ENCODE measurements at regions of chr12 and their contacts with region 1.

Region 1: DNA sequence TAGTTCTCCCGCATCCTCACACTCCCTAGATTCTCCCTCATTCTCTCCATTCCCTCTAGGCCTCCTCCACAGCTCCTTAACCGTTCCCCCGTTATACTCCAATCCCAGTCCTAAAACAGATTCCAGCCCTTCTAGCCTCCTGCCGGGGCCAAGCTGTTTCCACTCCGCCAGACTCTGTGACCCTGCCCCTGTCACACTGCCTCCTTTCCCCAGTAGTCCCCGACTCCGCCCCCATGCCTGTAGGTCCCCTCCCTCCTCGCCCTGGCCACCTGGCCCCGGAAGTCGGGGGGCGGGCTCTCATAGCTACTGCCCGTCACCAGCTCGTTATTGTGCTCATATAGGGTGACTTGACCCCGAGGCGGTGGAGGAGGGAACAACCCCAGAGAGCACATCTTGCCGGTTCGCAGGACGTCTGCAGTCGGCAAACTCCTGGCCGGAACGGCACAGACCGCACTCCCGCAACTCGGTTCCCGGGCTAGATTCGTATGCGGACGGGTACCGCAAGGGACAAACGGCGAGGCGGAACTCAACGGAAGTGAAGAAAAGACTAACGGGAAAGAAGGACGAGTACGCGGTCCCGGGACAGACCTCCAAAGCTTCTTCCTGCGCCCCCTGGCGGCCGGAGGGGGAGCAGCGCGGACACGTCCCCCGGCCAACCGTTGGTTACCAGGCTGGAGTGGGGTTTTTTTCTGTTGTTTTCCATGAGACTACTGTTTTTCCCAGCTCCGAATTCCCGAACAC is at the start of gene AAAS:
- DNase-seq: peak; percentile 97
- H3K4me3 ChIP-seq: peak within 1 kb of the TSS; percentile 63
- H3K4me3 Mint-ChIP-seq: peak within 1 kb of the TSS; percentile 84
- H3K27ac Mint-ChIP-seq: peak within 1 kb of the TSS; percentile 84
- H3K4me1 ChIP-seq: peaks cover 20% of the 10 kb centered on the region
- H3K4me1 Mint-ChIP-seq: peaks cover 13% of the 10 kb centered on the region
- H3K27me3 ChIP-seq: no peaks in the 10 kb centered on the region
- H3K27me3 Mint-ChIP-seq: no peaks in the 10 kb centered on the region
- CTCF ChIP-seq: peak; percentile 98
- total RNA-seq, gene AAAS: 63.8 and 67.2 TPM in 2 replicates

Region 2: GRCh38 chr12:53180220-53180930 is 140.9 kb before region 1 on chr12 and contains the starts of genes CSAD and ZNF740:
- CTCF ChIA-PET with region 1: interaction called, 6 read pairs
- POLR2A ChIA-PET with region 1: interaction called, 10 read pairs
- intact Hi-C with region 1: no loop called
- DNase-seq: peak; percentile 98
- H3K4me3 ChIP-seq: peak within 1 kb of the TSS; percentile 71
- H3K4me3 Mint-ChIP-seq: peak within 1 kb of the TSS; percentile 83
- H3K27ac Mint-ChIP-seq: peak within 1 kb of the TSS; percentile 85
- H3K4me1 ChIP-seq: peaks cover 21% of the 10 kb centered on the region
- H3K4me1 Mint-ChIP-seq: peaks cover 23% of the 10 kb centered on the region
- H3K27me3 ChIP-seq: no peaks in the 10 kb centered on the region
- H3K27me3 Mint-ChIP-seq: no peaks in the 10 kb centered on the region
- CTCF ChIP-seq: no peak
- total RNA-seq, gene CSAD: 20.1 and 23.0 TPM in 2 replicates
- total RNA-seq, gene ZNF740: 35.8 and 43.0 TPM in 2 replicates

Region 3: DNA sequence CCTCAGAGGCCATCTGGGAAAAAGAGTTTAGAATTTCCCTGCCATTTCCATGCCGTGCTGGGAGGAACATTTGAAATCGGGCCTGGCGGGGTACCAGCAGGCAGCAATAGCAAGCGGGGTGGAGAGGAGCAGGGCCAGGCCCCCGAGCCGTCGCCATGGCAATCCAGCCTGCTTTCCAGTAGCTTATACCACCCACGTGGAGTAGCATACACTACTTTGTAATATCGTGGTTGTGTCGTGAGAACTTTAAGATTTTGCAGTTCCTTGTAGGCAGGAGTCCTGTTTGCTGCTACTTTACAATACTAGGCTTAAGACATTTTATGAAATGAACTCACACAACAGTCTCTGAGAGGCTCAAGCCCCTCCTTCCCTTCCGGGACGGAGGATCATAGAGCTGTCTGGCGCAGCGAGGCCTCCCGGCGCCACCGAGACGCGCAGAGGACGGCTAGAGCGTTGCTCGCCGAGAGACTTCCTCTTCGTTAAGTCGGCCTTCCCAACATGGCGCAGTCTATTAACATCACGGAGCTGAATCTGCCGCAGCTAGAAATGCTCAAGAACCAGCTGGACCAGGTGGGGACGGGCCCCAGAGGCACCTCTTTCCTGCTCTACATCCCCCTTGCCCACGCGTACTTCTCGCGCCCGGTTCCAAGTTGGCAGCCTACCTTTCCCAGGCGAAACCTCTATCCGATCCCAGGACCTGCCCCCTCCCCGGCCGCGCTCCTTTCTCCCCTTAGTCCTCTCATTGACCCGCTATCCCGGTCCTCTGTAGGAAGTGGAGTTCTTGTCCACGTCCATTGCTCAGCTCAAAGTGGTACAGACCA is 26.0 kb before region 1 on chr12 and contains the start of gene PFDN5:
- CTCF ChIA-PET with region 1: interaction called, 31 read pairs
- POLR2A ChIA-PET with region 1: interaction called, 20 read pairs
- intact Hi-C with region 1: loop called (anchors 1 kb)
- DNase-seq: peak; percentile 84 to 89
- H3K4me3 ChIP-seq: peak within 1 kb of the TSS; percentile 87
- H3K4me3 Mint-ChIP-seq: peak within 1 kb of the TSS; percentile 93
- H3K27ac Mint-ChIP-seq: peak within 1 kb of the TSS; percentile 90
- H3K4me1 ChIP-seq: peaks cover 18% of the 10 kb centered on the region
- H3K4me1 Mint-ChIP-seq: peaks cover 11% of the 10 kb centered on the region
- H3K27me3 ChIP-seq: no peaks in the 10 kb centered on the region
- H3K27me3 Mint-ChIP-seq: no peaks in the 10 kb centered on the region
- CTCF ChIP-seq: no peak
- total RNA-seq, gene PFDN5: 251 and 264 TPM in 2 replicates

Region 4: DNA sequence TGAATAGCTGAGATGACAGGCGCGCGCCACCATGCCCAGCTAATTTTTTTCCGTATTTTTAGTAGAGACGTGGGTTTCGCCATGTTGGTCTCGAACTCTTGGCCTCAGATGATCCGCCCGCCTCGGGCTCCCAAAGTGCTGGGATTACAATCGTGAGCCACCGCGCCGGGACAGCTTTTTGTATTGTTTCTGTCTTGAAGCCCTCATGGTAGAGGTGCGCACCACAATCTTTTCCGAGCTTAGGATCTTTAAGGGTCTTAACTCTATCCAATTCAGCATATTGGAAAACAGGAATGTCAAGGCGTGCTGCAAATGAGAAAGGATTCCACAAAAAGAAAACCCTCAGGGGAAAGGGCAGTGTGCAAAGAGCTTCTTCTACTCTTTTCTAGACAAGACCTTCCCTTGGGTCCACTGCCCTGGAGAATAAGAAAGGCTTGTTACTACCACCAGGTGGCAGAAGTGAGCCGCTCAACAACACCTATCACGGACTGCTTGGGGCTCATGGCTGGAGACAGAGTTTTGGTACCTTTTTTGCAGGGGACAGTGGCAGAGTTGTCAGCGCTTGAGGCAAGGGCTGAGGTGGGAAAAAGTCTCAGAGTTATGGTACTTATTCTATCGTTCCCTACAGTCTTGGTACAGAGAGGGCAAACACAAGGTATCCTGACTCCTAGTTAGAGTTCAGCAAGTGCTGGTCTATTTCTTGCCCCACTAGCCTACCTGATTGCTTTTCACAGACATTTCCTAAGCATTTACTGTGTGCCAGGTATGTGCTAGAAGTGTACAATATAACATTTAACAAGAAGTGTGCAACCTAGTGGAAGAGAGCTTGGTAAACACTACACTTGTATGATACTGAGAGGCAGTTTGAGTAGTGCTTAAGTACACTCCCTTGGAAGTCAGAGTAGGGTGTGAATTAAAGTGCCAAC is 31.4 kb after region 1 on chr12:
- CTCF ChIA-PET with region 1: interaction called, 24 read pairs
- POLR2A ChIA-PET with region 1: interaction called, 3 read pairs
- intact Hi-C with region 1: loop called (anchors 2 kb)
- DNase-seq: peak; percentile 87 to 88
- H3K4me3 ChIP-seq: no peak overlapping the region
- H3K4me3 Mint-ChIP-seq: no peak overlapping the region
- H3K27ac Mint-ChIP-seq: peak overlapping the region; percentile 52
- H3K4me1 ChIP-seq: peaks cover 5% of the 10 kb centered on the region
- H3K4me1 Mint-ChIP-seq: peaks cover 10% of the 10 kb centered on the region
- H3K27me3 ChIP-seq: no peaks in the 10 kb centered on the region
- H3K27me3 Mint-ChIP-seq: no peaks in the 10 kb centered on the region
- CTCF ChIP-seq: peak; percentile 77 to 78

Region 5: DNA sequence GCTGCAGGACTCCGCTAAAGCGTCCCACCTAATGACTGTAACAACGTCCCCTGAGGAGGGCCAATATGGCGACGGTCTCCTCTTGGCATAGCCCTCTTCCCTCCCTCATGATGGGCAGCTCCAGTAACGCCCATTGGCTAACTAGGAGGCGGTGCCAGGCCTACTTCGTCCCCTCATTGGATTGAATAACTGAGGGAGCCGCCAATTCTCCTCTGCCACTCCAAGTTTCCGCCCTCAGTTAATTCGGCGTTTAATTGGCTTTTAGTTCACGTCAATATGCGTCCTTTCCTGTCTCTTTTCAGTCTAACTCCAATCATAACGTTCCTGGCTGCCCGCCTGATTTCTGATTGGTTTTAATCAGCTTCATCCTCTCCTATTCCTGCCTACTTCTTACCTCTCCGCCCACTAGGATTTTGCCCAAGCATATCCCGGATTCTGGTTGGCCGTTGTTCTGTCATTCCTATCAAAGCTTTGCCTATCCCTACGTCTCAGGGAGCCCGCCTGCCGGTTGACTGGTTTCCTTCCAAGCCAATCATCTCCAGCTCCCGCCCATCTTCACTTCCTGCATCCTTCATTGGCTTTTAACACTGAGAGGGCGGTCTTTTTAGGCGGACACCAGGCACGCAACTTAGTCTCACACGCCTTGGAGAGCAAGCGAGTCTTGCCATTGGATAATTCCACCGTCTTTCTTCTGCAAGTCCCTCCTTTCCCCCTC is 58.3 kb after region 1 on chr12:
- CTCF ChIA-PET with region 1: interaction called, 23 read pairs
- POLR2A ChIA-PET with region 1: interaction called, 13 read pairs
- intact Hi-C with region 1: loop called (anchors 2 kb)
- DNase-seq: peak; percentile 98 to 99
- H3K4me3 ChIP-seq: peak overlapping the region; percentile 45
- H3K4me3 Mint-ChIP-seq: no peak overlapping the region
- H3K27ac Mint-ChIP-seq: no peak overlapping the region
- H3K4me1 ChIP-seq: peaks cover 22% of the 10 kb centered on the region
- H3K4me1 Mint-ChIP-seq: peaks cover 9% of the 10 kb centered on the region
- H3K27me3 ChIP-seq: no peaks in the 10 kb centered on the region
- H3K27me3 Mint-ChIP-seq: no peaks in the 10 kb centered on the region
- CTCF ChIP-seq: no peak

Region 6: GRCh38 chr12:53402871-53403270 is 81.6 kb after region 1 on chr12:
- CTCF ChIA-PET with region 1: no interaction called
- POLR2A ChIA-PET with region 1: no interaction called
- intact Hi-C with region 1: no loop called
- DNase-seq: no peak
- H3K4me3 ChIP-seq: no peak overlapping the region
- H3K4me3 Mint-ChIP-seq: no peak overlapping the region
- H3K27ac Mint-ChIP-seq: no peak overlapping the region
- H3K4me1 ChIP-seq: no peaks in the 10 kb centered on the region
- H3K4me1 Mint-ChIP-seq: no peaks in the 10 kb centered on the region
- H3K27me3 ChIP-seq: no peaks in the 10 kb centered on the region
- H3K27me3 Mint-ChIP-seq: no peaks in the 10 kb centered on the region
- CTCF ChIP-seq: no peak

Region 7: DNA sequence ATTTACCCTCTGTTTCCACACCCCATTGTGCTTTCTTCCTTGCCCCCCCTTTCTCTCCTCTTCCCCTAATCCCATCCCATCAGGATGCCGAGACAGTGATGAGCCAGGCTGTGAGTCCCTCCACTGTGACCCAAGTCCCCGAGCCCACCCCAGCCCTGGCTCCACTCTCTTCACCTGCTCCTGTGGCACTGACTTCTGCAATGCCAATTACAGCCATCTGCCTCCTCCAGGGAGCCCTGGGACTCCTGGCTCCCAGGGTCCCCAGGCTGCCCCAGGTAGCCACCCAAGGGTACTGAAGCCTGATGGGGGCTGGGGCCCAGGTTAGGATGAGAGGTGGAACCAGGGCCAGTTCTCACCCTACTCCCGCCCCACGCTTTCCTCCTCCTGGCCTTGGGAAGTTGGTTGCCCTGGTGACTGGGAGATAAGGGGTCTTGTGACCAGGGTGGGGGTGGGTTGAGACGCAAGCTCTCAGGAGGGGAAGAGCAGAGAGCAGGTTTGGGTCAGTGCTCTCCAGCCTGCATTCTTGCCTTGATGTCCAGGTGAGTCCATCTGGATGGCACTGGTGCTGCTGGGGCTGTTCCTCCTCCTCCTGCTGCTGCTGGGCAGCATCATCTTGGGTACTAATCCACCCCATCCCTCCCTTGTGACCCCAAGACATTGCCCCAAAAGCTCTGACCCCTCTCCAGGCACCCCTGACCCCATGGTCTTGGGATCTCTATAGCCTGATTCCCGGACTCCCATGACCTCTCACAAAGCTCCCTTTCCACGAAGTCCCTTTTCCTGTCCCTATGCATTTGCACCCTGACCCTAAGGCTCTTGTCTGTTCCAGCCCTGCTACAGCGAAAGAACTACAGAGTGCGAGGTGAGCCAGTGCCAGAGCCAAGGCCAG is 103.6 kb after region 1 on chr12:
- CTCF ChIA-PET with region 1: interaction called, 29 read pairs
- POLR2A ChIA-PET with region 1: interaction called, 7 read pairs
- intact Hi-C with region 1: loop called (anchors 1 kb)
- DNase-seq: no peak
- H3K4me3 ChIP-seq: no peak overlapping the region
- H3K4me3 Mint-ChIP-seq: no peak overlapping the region
- H3K27ac Mint-ChIP-seq: no peak overlapping the region
- H3K4me1 ChIP-seq: peaks cover 15% of the 10 kb centered on the region
- H3K4me1 Mint-ChIP-seq: peaks cover 24% of the 10 kb centered on the region
- H3K27me3 ChIP-seq: no peaks in the 10 kb centered on the region
- H3K27me3 Mint-ChIP-seq: no peaks in the 10 kb centered on the region
- CTCF ChIP-seq: no peak

Region 8: DNA sequence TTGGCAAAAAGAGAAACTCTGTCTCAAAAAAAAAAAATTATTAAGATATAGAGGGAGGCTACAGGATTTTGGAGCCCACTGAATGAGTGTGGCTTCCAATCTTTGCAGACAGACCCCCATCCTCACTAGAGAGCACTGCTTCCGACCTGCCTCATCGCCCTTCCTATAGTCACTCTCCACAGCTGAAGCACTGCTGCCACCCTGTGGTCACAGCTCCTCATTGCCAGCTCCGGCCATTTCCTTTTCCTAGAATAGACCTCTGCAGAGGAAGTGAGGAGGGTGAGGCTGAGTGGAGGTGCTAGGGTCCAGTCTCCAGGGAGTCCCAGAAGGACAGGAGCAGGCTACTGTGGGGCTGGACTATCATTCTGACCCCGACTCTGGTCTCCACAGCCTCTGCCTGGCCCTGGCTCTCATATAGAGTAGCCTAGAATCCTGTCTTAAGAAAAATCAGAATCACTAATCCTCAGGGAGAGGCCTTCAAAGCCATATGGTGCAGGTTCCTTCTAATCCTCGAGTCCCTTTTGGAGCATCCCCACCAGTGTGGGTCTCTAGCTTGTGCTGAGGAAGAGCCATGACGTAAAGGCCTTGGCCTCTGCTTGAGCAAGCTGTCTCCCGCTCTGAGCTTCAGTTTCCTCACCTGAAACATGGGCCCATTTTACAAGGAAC is 187.4 kb after region 1 on chr12:
- CTCF ChIA-PET with region 1: interaction called, 17 read pairs
- POLR2A ChIA-PET with region 1: no interaction called
- intact Hi-C with region 1: loop called (anchors 2 kb)
- DNase-seq: peak; percentile 80 to 88
- H3K4me3 ChIP-seq: no peak overlapping the region
- H3K4me3 Mint-ChIP-seq: no peak overlapping the region
- H3K27ac Mint-ChIP-seq: no peak overlapping the region
- H3K4me1 ChIP-seq: no peaks in the 10 kb centered on the region
- H3K4me1 Mint-ChIP-seq: no peaks in the 10 kb centered on the region
- H3K27me3 ChIP-seq: no peaks in the 10 kb centered on the region
- H3K27me3 Mint-ChIP-seq: no peaks in the 10 kb centered on the region
- CTCF ChIP-seq: peak; percentile 81 to 91

Measured in Caco-2 (cell line).